Left lung (tissue), 14 donors: ENCODE measurements at regions of chr7 and their contacts with region 1.

Region 1: GRCh38 chr7:158976849-158977593 is 120.7 kb downstream of the DYNC2I1 start:
- DNase-seq: peak in 3 of 4 donors; percentile 48 to 81 (median 71)
- ATAC-seq: peak; percentile 98
- H3K4me3 ChIP-seq: peak overlapping the region; percentile 16 to 22
- H3K27ac ChIP-seq: peak overlapping the region in 1 of 2 donors; percentile 39
- H3K4me1 ChIP-seq: peaks cover 5 to 7% of the 10 kb centered on the region in 2 donors
- H3K27me3 ChIP-seq: peaks cover 0 to 5% of the 10 kb centered on the region in 2 donors
- CTCF ChIP-seq: peak; percentile 94

Region 2: GRCh38 chr7:158695726-158696452 is 281.1 kb before region 1 on chr7:
- intact Hi-C with region 1: loop called in 1 of 2 experiments (anchors 5 kb)
- DNase-seq: peak in 3 of 4 donors; percentile 51 to 85 (median 62)
- ATAC-seq: peak; percentile 99
- H3K4me3 ChIP-seq: no peak overlapping the region
- H3K27ac ChIP-seq: peak overlapping the region in 1 of 2 donors; percentile 1
- H3K4me1 ChIP-seq: peaks cover 5 to 9% of the 10 kb centered on the region in 2 donors
- H3K27me3 ChIP-seq: no peaks in the 10 kb centered on the region
- CTCF ChIP-seq: peak; percentile 51 to 67